ENCODE measurements at regions of chr4 and their contacts with region 1.

Region 1: GRCh38 chr4:186725469-186726425 is 2.1 kb upstream of the FAT1 start:
- DNase-seq: peak; percentile 64
- ATAC-seq: peak; percentile 58
- H3K4me3 ChIP-seq: peak overlapping the region; percentile 91 to 97
- H3K27ac ChIP-seq: peak overlapping the region; percentile 96
- H3K4me1 ChIP-seq: peaks cover 38 to 62% of the 10 kb centered on the region in 2 experiments
- H3K27me3 ChIP-seq: no peaks in the 10 kb centered on the region
- CTCF ChIP-seq: peak in 2 of 3 experiments; percentile 68 to 75; a peak in 4 of 6 replicates
- POLR2A ChIP-seq: no peak
- RAD21 ChIP-seq: no peak

Region 2: GRCh38 chr4:186297013-186297645 is 428.6 kb before region 1 on chr4:
- CTCF ChIA-PET with region 1: no interaction called
- POLR2A ChIA-PET with region 1: no interaction called
- RAD21 ChIA-PET with region 1: no interaction called
- intact Hi-C with region 1: loop called (anchors 5 kb)
- DNase-seq: peak; percentile 56
- ATAC-seq: peak; percentile 74
- H3K4me3 ChIP-seq: no peak overlapping the region
- H3K27ac ChIP-seq: no peak overlapping the region
- H3K4me1 ChIP-seq: no peaks in the 10 kb centered on the region
- H3K27me3 ChIP-seq: no peaks in the 10 kb centered on the region
- CTCF ChIP-seq: peak; percentile 53 to 78 (median 64); a peak in 5 of 6 replicates
- POLR2A ChIP-seq: no peak
- RAD21 ChIP-seq: peak; percentile 86

Region 3: GRCh38 chr4:186839122-186840037 is 113.6 kb after region 1 on chr4:
- CTCF ChIA-PET with region 1: no interaction called
- POLR2A ChIA-PET with region 1: interaction called, 5 read pairs
- RAD21 ChIA-PET with region 1: no interaction called
- intact Hi-C with region 1: loop called (anchors 1 kb)
- DNase-seq: no peak
- ATAC-seq: peak; percentile 64
- H3K4me3 ChIP-seq: peak overlapping the region; percentile 59 to 64
- H3K27ac ChIP-seq: peak overlapping the region; percentile 98
- H3K4me1 ChIP-seq: peaks cover 31 to 60% of the 10 kb centered on the region in 2 experiments
- H3K27me3 ChIP-seq: no peaks in the 10 kb centered on the region
- CTCF ChIP-seq: no peak
- POLR2A ChIP-seq: no peak
- RAD21 ChIP-seq: no peak

Region 4: GRCh38 chr4:186932631-186933187 is 207.0 kb after region 1 on chr4:
- CTCF ChIA-PET with region 1: no interaction called
- POLR2A ChIA-PET with region 1: interaction called, 6 read pairs
- RAD21 ChIA-PET with region 1: interaction called in 1 of 2 experiments, 4 read pairs
- intact Hi-C with region 1: loop called (anchors 1 kb)
- DNase-seq: peak; percentile 99
- ATAC-seq: peak; percentile 71
- H3K4me3 ChIP-seq: peak overlapping the region in 1 of 2 experiments; percentile 26; a peak in 2 of 4 replicates
- H3K27ac ChIP-seq: peak overlapping the region; percentile 77
- H3K4me1 ChIP-seq: peaks cover 70 to 98% of the 10 kb centered on the region in 2 experiments
- H3K27me3 ChIP-seq: no peaks in the 10 kb centered on the region
- CTCF ChIP-seq: no peak
- POLR2A ChIP-seq: no peak
- RAD21 ChIP-seq: no peak

Region 5: GRCh38 chr4:187084701-187085100 is 359.0 kb after region 1 on chr4:
- CTCF ChIA-PET with region 1: no interaction called
- POLR2A ChIA-PET with region 1: no interaction called
- RAD21 ChIA-PET with region 1: no interaction called
- intact Hi-C with region 1: loop called (anchors 10 kb)
- DNase-seq: no peak
- ATAC-seq: no peak
- H3K4me3 ChIP-seq: no peak overlapping the region
- H3K27ac ChIP-seq: no peak overlapping the region
- H3K4me1 ChIP-seq: no peaks in the 10 kb centered on the region
- H3K27me3 ChIP-seq: no peaks in the 10 kb centered on the region
- CTCF ChIP-seq: no peak
- POLR2A ChIP-seq: no peak
- RAD21 ChIP-seq: no peak

Region 6: DNA sequence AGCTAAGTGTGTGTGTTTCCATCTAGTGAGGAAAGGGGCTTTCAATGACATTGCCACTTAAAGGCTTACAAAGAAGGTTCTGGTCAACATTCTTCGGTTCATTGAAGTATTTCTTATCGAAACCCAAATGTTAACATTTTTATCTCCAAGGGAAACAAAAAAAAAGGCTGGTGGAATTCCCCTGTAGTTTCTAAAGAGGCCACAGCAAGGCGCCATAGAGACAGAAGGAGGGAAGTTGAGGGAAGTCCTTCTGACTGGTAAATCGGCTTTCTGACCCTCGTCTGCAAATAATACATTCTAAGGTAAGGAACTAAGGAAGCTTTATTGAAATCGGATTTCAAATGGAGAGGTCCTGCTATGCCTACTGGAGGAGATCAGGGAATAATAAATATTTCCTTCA is 1268.1 kb after region 1 on chr4:
- CTCF ChIA-PET with region 1: no interaction called
- POLR2A ChIA-PET with region 1: no interaction called
- RAD21 ChIA-PET with region 1: no interaction called
- intact Hi-C with region 1: loop called (anchors 10 kb)
- DNase-seq: peak; percentile 34
- ATAC-seq: peak; percentile 65; the same call in 1 of the 2 replicates
- H3K4me3 ChIP-seq: no peak overlapping the region
- H3K27ac ChIP-seq: no peak overlapping the region
- H3K4me1 ChIP-seq: peaks cover 2 to 13% of the 10 kb centered on the region in 2 experiments; a peak in 3 of 4 replicates
- H3K27me3 ChIP-seq: no peaks in the 10 kb centered on the region
- CTCF ChIP-seq: peak; percentile 57 to 72 (median 66); a peak in 5 of 6 replicates
- POLR2A ChIP-seq: no peak
- RAD21 ChIP-seq: peak; percentile 74

Measured in HCT116 (cell line).